Activated CD4-positive, alpha-beta T cell treated with anti-CD3 and anti-CD28 coated beads, Interleukin-2, amount 10 ng/mL, durations not matched to agents 24 days and 14 days (primary cell): ENCODE measurements at regions of chr11 and their contacts with region 1.

Region 1: GRCh38 chr11:130131961-130132850 is 27.4 kb upstream of the ST14 start:
- DNase-seq: peak; percentile 88
- H3K4me3 Mint-ChIP-seq: no peak overlapping the region
- H3K27ac Mint-ChIP-seq: no peak overlapping the region
- H3K4me1 Mint-ChIP-seq: no peaks in the 10 kb centered on the region
- H3K27me3 Mint-ChIP-seq: no peaks in the 10 kb centered on the region

Region 2: GRCh38 chr11:129766898-129767604 is 365.2 kb before region 1 on chr11:
- intact Hi-C with region 1: loop called (anchors 5 kb)
- DNase-seq: peak; percentile 74
- H3K4me3 Mint-ChIP-seq: no peak overlapping the region
- H3K27ac Mint-ChIP-seq: no peak overlapping the region
- H3K4me1 Mint-ChIP-seq: peaks cover 2% of the 10 kb centered on the region
- H3K27me3 Mint-ChIP-seq: peaks cover 4% of the 10 kb centered on the region

Region 3: GRCh38 chr11:129785383-129786111 is 346.7 kb before region 1 on chr11:
- intact Hi-C with region 1: loop called (anchors 5 kb)
- DNase-seq: no peak
- H3K4me3 Mint-ChIP-seq: no peak overlapping the region
- H3K27ac Mint-ChIP-seq: no peak overlapping the region
- H3K4me1 Mint-ChIP-seq: peaks cover 9% of the 10 kb centered on the region
- H3K27me3 Mint-ChIP-seq: peaks cover 3% of the 10 kb centered on the region

Region 4: GRCh38 chr11:129922674-129923073 is 209.5 kb before region 1 on chr11:
- intact Hi-C with region 1: loop called (anchors 1 kb)
- DNase-seq: no peak
- H3K4me3 Mint-ChIP-seq: no peak overlapping the region
- H3K27ac Mint-ChIP-seq: no peak overlapping the region
- H3K4me1 Mint-ChIP-seq: peaks cover 19% of the 10 kb centered on the region
- H3K27me3 Mint-ChIP-seq: no peaks in the 10 kb centered on the region

Region 5: GRCh38 chr11:130181295-130182272 is 49.4 kb after region 1 on chr11:
- intact Hi-C with region 1: no loop called
- DNase-seq: no peak
- H3K4me3 Mint-ChIP-seq: no peak overlapping the region
- H3K27ac Mint-ChIP-seq: no peak overlapping the region
- H3K4me1 Mint-ChIP-seq: no peaks in the 10 kb centered on the region
- H3K27me3 Mint-ChIP-seq: peaks cover 10% of the 10 kb centered on the region